Right cardiac atrium (tissue), 5 donors: ENCODE measurements at regions of chr4 and their contacts with region 1.

Region 1: GRCh38 chr4:87235020-87235671 is 14.7 kb upstream of the KLHL8 start:
- DNase-seq: no peak
- ATAC-seq: peak in 1 of 2 donors; percentile 42
- H3K4me3 ChIP-seq: peak overlapping the region; percentile 82
- H3K27ac ChIP-seq: no peak overlapping the region
- H3K4me1 ChIP-seq: no peaks in the 10 kb centered on the region
- H3K27me3 ChIP-seq: no peaks in the 10 kb centered on the region

Region 2: GRCh38 chr4:86927843-86928395 is 307.2 kb before region 1 on chr4:
- intact Hi-C with region 1: loop called in 3 of 4 experiments (anchors 10 kb)
- DNase-seq: peak in 1 of 3 donors; percentile 50
- ATAC-seq: peak; percentile 61 to 86
- H3K4me3 ChIP-seq: no peak overlapping the region
- H3K27ac ChIP-seq: no peak overlapping the region
- H3K4me1 ChIP-seq: peaks cover 2% of the 10 kb centered on the region
- H3K27me3 ChIP-seq: no peaks in the 10 kb centered on the region

Region 3: DNA sequence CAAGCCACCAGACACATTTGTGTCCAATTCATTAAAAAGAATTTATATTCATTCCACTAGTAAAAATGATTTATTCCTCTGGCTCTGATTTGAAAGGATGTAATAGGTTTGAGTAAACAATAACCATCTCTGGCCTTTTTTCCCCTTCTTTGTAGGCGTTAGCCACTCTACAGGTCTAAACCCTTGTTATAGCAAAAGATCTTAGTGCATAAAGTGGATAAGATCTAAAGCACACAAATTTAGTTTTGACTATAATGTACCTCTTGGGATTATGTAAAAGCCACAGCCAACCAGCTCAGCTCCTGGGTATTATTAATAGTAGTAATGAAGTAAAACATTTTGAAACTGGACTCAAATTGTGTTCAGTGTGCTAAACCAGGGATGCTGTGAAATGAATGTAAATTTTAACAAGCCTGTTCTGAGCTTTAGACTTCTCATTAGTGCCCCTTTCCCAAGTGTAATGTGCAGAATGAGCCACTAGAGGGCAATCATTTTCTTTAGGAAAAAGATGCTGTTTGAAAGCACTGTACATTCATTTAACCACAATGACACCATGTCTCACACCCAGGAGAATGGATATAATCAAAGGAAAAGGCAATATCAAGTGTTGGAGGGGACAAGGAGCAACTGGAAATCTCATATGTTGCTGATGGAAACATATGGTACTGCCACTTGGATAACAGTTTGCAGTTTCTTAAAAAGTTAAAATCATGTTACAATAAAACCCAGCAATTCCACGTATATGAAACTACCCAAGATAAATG is 84.5 kb before region 1 on chr4:
- intact Hi-C with region 1: loop called in 3 of 4 experiments (anchors 2 to 10 kb)
- DNase-seq: no peak
- ATAC-seq: peak; percentile 59 to 77
- H3K4me3 ChIP-seq: no peak overlapping the region
- H3K27ac ChIP-seq: no peak overlapping the region
- H3K4me1 ChIP-seq: no peaks in the 10 kb centered on the region
- H3K27me3 ChIP-seq: no peaks in the 10 kb centered on the region